A673 (cell line): ENCODE measurements at regions of chr15 and their contacts with region 1.

Region 1: GRCh38 chr15:55993111-55993803 is at the start of gene NEDD4:
- DNase-seq: peak; percentile 95
- H3K4me3 ChIP-seq: peak within 1 kb of the TSS; percentile 92
- H3K27ac ChIP-seq: peak within 1 kb of the TSS; percentile 89
- H3K4me1 ChIP-seq: peaks cover 17% of the 10 kb centered on the region
- H3K27me3 ChIP-seq: no peaks in the 10 kb centered on the region
- CTCF ChIP-seq: peak; percentile 46
- total RNA-seq, gene NEDD4: 23.1 and 23.6 TPM in 2 replicates

Region 2: DNA sequence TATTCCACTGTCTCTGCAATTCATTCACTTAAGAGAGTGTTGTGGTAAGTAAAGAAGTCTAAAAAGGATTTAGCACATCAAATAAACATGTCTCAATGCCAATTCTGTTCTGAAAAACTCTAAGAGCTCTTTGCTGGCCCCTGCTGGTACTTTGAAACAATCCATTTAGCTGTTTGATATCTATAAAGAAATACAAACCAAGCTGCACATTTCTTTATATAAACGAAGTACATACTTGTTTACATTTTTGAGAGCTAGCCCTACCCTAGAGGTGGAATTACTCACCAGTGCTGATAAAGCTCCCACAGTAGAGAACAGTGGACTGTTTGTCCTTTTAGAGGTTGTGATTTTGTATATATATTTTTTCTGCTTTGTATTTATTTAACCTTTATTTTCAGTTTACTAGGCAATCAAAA is 75.4 kb before region 1 on chr15:
- CTCF ChIA-PET with region 1: no interaction called
- POLR2A ChIA-PET with region 1: no interaction called
- intact Hi-C with region 1: loop called (anchors 5 kb)
- DNase-seq: peak; percentile 73
- H3K4me3 ChIP-seq: no peak overlapping the region
- H3K27ac ChIP-seq: no peak overlapping the region
- H3K4me1 ChIP-seq: peaks cover 17% of the 10 kb centered on the region
- H3K27me3 ChIP-seq: no peaks in the 10 kb centered on the region
- CTCF ChIP-seq: peak; percentile 71

Region 3: DNA sequence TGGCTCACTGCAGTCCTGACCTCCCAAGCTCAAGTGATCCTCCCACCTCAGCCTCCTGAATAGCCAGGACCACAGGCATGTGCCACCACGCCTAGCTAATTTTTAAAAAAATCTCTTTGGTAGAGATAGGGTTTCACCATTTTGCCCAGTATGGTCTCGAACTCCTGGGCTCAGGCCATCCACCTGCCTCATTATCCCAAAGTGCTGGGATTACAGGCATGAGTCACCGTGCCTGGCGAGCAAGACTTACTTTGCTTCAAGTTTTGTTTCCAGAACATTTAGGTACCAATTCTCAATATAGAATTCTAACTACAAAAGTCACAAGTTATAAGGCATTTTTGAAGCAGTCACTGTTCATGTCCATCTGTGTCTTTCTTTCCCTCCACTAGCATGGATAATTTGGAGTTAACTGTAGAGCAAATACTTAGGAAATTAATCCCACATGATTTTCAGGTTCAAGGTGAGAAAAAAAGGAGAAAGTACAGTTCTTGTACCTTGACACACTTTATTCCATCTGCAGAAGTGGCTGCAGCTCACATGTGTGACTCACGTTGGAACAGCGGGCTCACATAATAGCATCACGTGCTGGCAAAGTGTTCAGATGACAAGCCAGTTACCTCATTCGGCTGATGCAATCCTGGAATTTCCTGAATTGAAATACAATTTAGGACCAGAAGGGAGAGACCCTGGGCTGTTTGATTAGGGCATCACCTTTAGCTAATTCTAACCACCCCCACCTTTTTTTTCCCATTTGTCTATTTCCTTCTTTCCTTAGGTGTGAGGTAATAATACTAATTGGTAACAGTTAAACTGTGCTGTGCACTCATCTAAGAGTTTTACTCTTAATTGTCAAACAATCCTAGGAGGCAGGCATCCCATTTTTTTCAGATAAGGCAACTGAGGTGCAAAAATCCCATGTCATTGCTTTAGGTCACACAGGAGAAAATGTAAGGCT is 47.1 kb after region 1 on chr15:
- CTCF ChIA-PET with region 1: no interaction called
- POLR2A ChIA-PET with region 1: no interaction called
- intact Hi-C with region 1: loop called (anchors 5 kb)
- DNase-seq: peak; percentile 89
- H3K4me3 ChIP-seq: no peak overlapping the region
- H3K27ac ChIP-seq: peak overlapping the region; percentile 64
- H3K4me1 ChIP-seq: peaks cover 16% of the 10 kb centered on the region
- H3K27me3 ChIP-seq: no peaks in the 10 kb centered on the region
- CTCF ChIP-seq: no peak

Region 4: DNA sequence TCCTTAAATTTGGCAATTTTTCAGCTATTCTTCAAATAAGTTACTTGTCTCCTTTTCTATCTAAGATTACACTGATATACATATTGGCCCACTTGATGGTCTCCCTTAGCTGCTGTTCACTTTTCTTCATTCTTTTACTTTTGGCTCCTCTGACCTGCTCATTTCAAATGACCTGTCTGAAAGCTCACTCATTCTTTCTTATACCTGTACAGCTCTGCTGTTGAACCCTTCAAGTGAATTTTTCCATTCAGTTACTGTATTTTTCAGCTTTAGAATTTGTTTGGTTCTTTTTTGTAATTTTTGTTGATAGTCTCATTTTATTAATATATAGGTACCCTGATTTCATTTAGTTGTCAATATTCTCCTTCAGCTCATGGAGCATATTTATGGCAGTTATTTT is 432.0 kb after region 1 on chr15:
- CTCF ChIA-PET with region 1: no interaction called
- POLR2A ChIA-PET with region 1: no interaction called
- intact Hi-C with region 1: no loop called
- DNase-seq: no peak
- H3K4me3 ChIP-seq: no peak overlapping the region
- H3K27ac ChIP-seq: no peak overlapping the region
- H3K4me1 ChIP-seq: no peaks in the 10 kb centered on the region
- H3K27me3 ChIP-seq: no peaks in the 10 kb centered on the region
- CTCF ChIP-seq: no peak